Caco-2 (cell line): ENCODE measurements at regions of chr6 and their contacts with region 1.

Region 1: DNA sequence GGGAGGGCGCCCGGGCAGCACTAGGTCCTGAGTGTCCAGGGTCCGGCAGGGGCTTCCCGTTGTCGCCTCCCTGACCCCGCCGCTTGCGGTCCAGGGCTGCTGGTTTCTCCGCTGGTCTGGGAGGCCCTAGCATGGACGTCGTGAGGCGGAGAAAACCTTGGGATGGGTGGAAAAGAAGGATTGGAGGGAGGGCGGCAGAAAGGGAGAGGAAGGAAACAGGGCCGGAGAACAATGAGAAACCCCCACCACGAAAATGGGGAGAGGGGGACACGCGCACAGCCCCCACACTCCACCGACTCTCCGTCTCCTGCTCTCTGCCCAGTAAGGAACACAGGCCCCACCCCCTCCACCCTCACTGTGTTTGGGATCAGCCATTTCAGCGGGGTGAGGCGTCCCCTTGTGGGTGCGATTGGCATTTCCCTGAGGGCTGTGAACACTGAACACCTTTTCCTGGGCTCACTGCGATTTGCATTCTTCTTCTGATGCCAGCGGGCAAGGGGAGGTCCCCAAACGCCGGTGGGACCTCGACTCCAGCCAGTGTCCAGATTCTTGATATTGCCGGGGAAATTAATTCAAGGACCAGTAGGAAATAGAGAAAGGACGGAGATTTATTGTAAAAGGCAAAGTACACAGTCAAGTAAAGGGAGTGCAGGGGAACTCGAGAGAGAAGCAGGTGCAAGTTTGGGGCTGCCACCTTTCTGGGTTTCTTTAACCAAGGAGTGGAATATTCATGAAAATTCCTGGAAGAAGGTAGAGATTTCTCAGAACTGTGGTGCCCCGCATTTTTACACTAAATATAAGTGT is 3.3 kb upstream of the RAET1G start:
- DNase-seq: peak; percentile 86 to 89
- H3K4me3 ChIP-seq: peak overlapping the region; percentile 49
- H3K4me3 Mint-ChIP-seq: peak overlapping the region; percentile 75
- H3K27ac Mint-ChIP-seq: peak overlapping the region; percentile 0
- H3K4me1 ChIP-seq: no peaks in the 10 kb centered on the region
- H3K4me1 Mint-ChIP-seq: peaks cover 7% of the 10 kb centered on the region
- H3K27me3 ChIP-seq: no peaks in the 10 kb centered on the region; the same call in none of the 2 replicates
- H3K27me3 Mint-ChIP-seq: peaks cover 37% of the 10 kb centered on the region
- CTCF ChIP-seq: peak; percentile 88 to 94

Region 2: DNA sequence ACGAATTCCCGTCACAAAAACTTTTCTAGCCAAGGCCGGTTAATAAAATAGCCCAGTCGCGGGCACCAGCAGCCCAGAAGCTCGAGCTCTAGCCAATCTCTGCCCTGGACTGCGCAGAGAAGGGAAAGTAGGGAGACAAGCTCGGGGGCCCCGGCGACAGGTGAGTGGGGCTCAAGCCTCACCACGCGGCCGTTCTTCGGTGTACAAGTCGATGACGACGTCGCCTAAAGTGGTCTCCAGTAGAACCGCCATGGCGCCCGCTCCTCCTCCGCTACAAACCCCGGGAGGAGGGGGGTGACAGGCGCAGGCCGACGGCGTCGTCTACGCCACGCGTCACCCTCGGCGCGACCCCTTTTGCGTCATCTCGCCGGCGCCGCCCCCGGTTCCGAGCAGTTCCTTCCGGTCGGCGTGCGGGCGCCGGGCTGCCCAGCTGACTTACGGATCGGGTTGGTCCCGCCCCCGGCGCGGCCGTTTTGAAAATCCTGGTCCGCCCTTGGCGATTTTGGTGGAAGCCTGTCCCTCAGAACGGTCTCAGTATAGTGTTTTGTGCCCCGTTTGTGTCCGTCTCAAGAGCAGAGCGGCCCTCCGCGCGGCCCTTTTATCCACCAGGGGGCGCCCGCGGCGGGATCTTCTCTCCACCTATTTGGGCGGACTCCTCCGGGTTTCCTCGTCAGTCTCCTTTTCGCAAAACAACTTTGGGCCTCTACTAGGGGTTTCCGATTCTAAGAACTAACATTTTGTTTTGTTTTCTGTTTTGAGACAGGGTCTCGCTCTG is 380.2 kb before region 1 on chr6 and contains the start of gene PPIL4:
- CTCF ChIA-PET with region 1: no interaction called
- POLR2A ChIA-PET with region 1: no interaction called
- intact Hi-C with region 1: loop called (anchors 5 kb)
- DNase-seq: peak; percentile 93 to 96
- H3K4me3 ChIP-seq: peak within 1 kb of the TSS; percentile 61
- H3K4me3 Mint-ChIP-seq: peak within 1 kb of the TSS; percentile 81
- H3K27ac Mint-ChIP-seq: peak within 1 kb of the TSS; percentile 98
- H3K4me1 ChIP-seq: no peaks in the 10 kb centered on the region
- H3K4me1 Mint-ChIP-seq: peaks cover 16% of the 10 kb centered on the region
- H3K27me3 ChIP-seq: no peaks in the 10 kb centered on the region
- H3K27me3 Mint-ChIP-seq: no peaks in the 10 kb centered on the region
- CTCF ChIP-seq: peak; percentile 91 to 93
- total RNA-seq, gene PPIL4: 28.3 and 28.4 TPM in 2 replicates

Region 3: GRCh38 chr6:149723771-149724417 is 202.3 kb before region 1 on chr6:
- CTCF ChIA-PET with region 1: no interaction called
- POLR2A ChIA-PET with region 1: no interaction called
- intact Hi-C with region 1: loop called (anchors 1 kb)
- DNase-seq: peak; percentile 55 to 62
- H3K4me3 ChIP-seq: no peak overlapping the region
- H3K4me3 Mint-ChIP-seq: no peak overlapping the region
- H3K27ac Mint-ChIP-seq: no peak overlapping the region
- H3K4me1 ChIP-seq: peaks cover 9% of the 10 kb centered on the region
- H3K4me1 Mint-ChIP-seq: peaks cover 14% of the 10 kb centered on the region
- H3K27me3 ChIP-seq: no peaks in the 10 kb centered on the region
- H3K27me3 Mint-ChIP-seq: no peaks in the 10 kb centered on the region
- CTCF ChIP-seq: peak; percentile 73 to 84

Region 4: DNA sequence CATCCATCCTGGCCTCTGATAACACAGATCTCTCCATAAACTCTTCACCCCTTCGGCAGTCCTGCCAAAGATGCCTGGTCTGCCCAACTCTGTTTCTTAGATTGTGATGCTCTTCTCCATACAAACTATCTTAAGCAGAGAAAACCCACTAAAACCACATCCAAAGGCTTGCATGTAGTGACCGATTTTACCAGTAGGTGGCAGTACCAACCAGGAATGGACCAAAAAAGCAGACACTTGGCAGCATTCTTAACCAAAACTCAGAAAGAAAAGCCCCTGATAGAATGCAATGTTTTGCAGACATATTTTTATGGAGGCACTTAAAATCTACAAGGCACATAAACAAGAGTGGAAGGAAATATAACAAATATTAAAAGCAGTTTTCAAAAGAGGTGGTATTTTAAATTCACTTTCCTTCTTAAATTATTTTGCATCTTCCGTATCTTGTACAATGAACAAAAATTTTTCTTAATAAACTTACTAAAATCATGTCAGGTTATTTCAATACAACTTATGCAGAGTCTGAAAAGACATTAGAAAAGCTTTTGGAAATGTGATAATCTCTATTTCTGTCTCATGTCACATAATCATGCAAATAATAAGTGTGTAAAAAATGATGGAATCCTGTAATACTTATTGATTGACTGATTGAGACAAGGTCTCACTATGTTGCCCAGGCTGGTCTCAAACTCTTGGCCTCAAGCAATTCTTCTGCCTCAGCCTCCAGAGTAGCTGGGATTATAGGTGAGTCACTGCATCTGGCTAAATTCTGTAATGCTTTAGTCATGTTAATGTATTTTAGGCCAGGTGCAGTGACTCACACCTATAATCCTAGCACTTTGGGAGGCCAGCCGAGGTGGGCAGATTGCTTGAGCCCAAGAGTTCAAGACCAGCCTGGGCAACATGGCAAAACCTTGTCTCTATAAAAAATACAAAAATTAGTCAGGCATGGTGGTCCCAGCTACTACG is 91.4 kb before region 1 on chr6:
- CTCF ChIA-PET with region 1: no interaction called
- POLR2A ChIA-PET with region 1: no interaction called
- intact Hi-C with region 1: loop called (anchors 1 kb)
- DNase-seq: peak; percentile 53 to 74
- H3K4me3 ChIP-seq: no peak overlapping the region
- H3K4me3 Mint-ChIP-seq: no peak overlapping the region
- H3K27ac Mint-ChIP-seq: no peak overlapping the region
- H3K4me1 ChIP-seq: no peaks in the 10 kb centered on the region
- H3K4me1 Mint-ChIP-seq: no peaks in the 10 kb centered on the region
- H3K27me3 ChIP-seq: no peaks in the 10 kb centered on the region
- H3K27me3 Mint-ChIP-seq: no peaks in the 10 kb centered on the region
- CTCF ChIP-seq: peak; percentile 76 to 86

Region 5: GRCh38 chr6:149840345-149841075 is 85.7 kb before region 1 on chr6:
- CTCF ChIA-PET with region 1: interaction called, 10 read pairs
- POLR2A ChIA-PET with region 1: no interaction called
- intact Hi-C with region 1: loop called (anchors 1 kb)
- DNase-seq: peak; percentile 79 to 85
- H3K4me3 ChIP-seq: no peak overlapping the region
- H3K4me3 Mint-ChIP-seq: no peak overlapping the region
- H3K27ac Mint-ChIP-seq: no peak overlapping the region
- H3K4me1 ChIP-seq: peaks cover 20% of the 10 kb centered on the region
- H3K4me1 Mint-ChIP-seq: peaks cover 22% of the 10 kb centered on the region
- H3K27me3 ChIP-seq: no peaks in the 10 kb centered on the region
- H3K27me3 Mint-ChIP-seq: no peaks in the 10 kb centered on the region
- CTCF ChIP-seq: peak; percentile 78 to 94

Region 6: DNA sequence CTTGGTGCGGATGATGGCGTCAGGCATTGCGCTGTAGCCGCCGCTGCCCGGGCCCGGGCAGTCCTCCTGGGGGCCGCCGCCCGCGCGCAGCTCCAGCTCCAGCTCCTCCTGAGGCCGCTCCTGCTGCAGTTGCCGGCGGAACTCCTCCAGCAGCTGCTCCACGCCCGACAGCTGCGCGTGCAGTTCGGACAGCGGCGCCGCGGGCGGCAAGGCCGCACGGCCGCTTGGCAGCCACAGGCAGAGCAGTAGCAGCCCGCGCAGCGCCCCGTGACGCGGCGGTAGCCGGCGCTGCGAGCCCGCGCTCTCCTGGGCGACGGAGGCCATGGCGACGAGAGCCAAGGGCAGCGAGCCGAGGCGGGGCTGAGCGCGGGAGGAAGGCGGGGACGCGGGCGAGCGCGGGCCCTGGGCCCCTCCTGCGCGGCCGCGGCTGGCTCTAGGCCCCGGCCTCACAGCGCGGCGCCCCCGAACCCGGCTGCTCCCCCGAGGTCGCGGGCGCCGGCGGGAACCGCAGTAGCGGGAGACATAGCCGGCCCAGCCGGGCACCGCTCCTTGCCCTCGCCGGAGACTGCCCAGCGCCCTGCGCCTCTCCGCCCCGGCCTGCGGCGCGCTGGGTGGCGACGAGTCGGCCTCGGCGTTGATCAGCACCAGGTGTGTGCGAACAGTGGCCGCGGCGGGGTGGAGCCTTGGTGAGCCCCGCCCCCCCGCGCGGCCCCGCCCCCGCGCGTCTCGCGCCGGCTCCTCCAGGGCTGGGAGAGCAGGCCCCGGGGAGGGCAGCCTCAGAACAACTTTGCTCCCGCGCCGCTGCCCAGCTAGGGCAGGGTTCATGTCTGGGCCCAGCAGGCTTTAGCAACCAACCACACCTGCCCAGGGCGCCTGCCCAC is 62.2 kb before region 1 on chr6 and contains the start of gene LRP11:
- CTCF ChIA-PET with region 1: no interaction called
- POLR2A ChIA-PET with region 1: no interaction called
- intact Hi-C with region 1: loop called (anchors 1 kb)
- DNase-seq: peak; percentile 83 to 92
- H3K4me3 ChIP-seq: peak within 1 kb of the TSS; percentile 75
- H3K4me3 Mint-ChIP-seq: peak within 1 kb of the TSS; percentile 86
- H3K27ac Mint-ChIP-seq: peak within 1 kb of the TSS; percentile 71
- H3K4me1 ChIP-seq: peaks cover 8% of the 10 kb centered on the region
- H3K4me1 Mint-ChIP-seq: peaks cover 28% of the 10 kb centered on the region
- H3K27me3 ChIP-seq: no peaks in the 10 kb centered on the region
- H3K27me3 Mint-ChIP-seq: no peaks in the 10 kb centered on the region
- CTCF ChIP-seq: no peak
- total RNA-seq, gene LRP11: 17.7 and 18.4 TPM in 2 replicates

Region 7: GRCh38 chr6:149884215-149884614 is 42.0 kb before region 1 on chr6:
- CTCF ChIA-PET with region 1: no interaction called
- POLR2A ChIA-PET with region 1: no interaction called
- intact Hi-C with region 1: loop called (anchors 5 kb)
- DNase-seq: no peak
- H3K4me3 ChIP-seq: no peak overlapping the region
- H3K4me3 Mint-ChIP-seq: no peak overlapping the region
- H3K27ac Mint-ChIP-seq: no peak overlapping the region
- H3K4me1 ChIP-seq: no peaks in the 10 kb centered on the region
- H3K4me1 Mint-ChIP-seq: no peaks in the 10 kb centered on the region
- H3K27me3 ChIP-seq: no peaks in the 10 kb centered on the region
- H3K27me3 Mint-ChIP-seq: peaks cover 7% of the 10 kb centered on the region
- CTCF ChIP-seq: no peak

Region 8: GRCh38 chr6:149905911-149906371 is 20.2 kb before region 1 on chr6:
- CTCF ChIA-PET with region 1: no interaction called
- POLR2A ChIA-PET with region 1: no interaction called
- intact Hi-C with region 1: no loop called
- DNase-seq: no peak
- H3K4me3 ChIP-seq: no peak overlapping the region
- H3K4me3 Mint-ChIP-seq: no peak overlapping the region
- H3K27ac Mint-ChIP-seq: no peak overlapping the region
- H3K4me1 ChIP-seq: no peaks in the 10 kb centered on the region
- H3K4me1 Mint-ChIP-seq: no peaks in the 10 kb centered on the region
- H3K27me3 ChIP-seq: no peaks in the 10 kb centered on the region
- H3K27me3 Mint-ChIP-seq: peaks cover 5% of the 10 kb centered on the region
- CTCF ChIP-seq: no peak

Region 9: GRCh38 chr6:150119173-150119572 is 193.0 kb after region 1 on chr6:
- CTCF ChIA-PET with region 1: no interaction called
- POLR2A ChIA-PET with region 1: no interaction called
- intact Hi-C with region 1: no loop called
- DNase-seq: no peak
- H3K4me3 ChIP-seq: no peak overlapping the region
- H3K4me3 Mint-ChIP-seq: no peak overlapping the region
- H3K27ac Mint-ChIP-seq: peak overlapping the region; percentile 73
- H3K4me1 ChIP-seq: peaks cover 16% of the 10 kb centered on the region; the same call in 1 of the 2 replicates
- H3K4me1 Mint-ChIP-seq: peaks cover 11% of the 10 kb centered on the region
- H3K27me3 ChIP-seq: no peaks in the 10 kb centered on the region
- H3K27me3 Mint-ChIP-seq: no peaks in the 10 kb centered on the region
- CTCF ChIP-seq: no peak